T-cell (primary cell): ENCODE measurements at regions of chr1 and their contacts with region 1.

Region 1: DNA sequence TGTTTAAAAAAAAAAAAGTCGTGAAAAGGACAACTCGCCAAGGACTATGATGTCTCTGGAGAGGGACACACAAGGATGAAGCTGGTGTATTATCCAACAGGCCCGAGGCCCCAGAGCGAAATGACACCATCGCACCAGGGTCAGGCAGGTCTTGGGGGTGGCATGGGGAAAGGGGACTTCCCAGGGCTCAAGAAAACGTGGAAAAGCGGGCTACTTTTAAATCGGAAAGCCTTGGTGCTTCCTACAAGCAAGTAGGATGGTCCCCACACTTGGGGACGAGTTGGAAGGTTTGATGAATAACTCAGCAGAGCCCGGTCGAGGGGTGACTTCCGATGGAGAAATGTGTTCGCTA is 505 bp upstream of the GNPAT start:
- DNase-seq: peak in 1 of 35 experiments; percentile 4
- ATAC-seq: peak in 2 of 4 experiments; percentile 3 to 11
- H3K4me3 ChIP-seq: peak overlapping the region; percentile 68 to 96
- H3K4me3 Mint-ChIP-seq: peak overlapping the region; percentile 91 to 97 (median 94)
- H3K27ac ChIP-seq: peak overlapping the region; percentile 67
- H3K27ac Mint-ChIP-seq: peak overlapping the region; percentile 95 to 98
- H3K4me1 ChIP-seq: peaks cover 21 to 22% of the 10 kb centered on the region in 2 experiments
- H3K4me1 Mint-ChIP-seq: peaks cover 75 to 85% (median 80%) of the 10 kb centered on the region in 3 donors
- H3K27me3 ChIP-seq: no peaks in the 10 kb centered on the region
- H3K27me3 Mint-ChIP-seq: no peaks in the 10 kb centered on the region

Region 2: DNA sequence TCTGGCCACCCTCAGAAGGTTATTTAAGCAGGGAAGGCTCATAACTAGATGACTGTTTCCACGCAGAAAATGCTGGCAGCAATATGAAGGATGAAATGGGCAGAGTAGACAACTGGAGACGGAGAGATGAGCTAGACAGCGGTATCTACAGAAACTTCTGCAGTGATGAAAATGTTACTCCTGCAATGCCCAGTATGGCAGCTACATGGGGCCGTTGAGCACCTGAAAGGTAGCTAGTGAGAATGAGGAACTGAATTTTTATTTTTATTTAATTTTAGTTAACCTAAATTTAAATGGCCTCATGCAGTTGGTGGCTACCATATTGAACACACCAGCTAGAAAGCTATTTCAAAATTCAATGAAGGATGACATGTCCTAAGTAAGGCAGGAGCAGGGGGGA is 1362.1 kb after region 1 on chr1:
- CTCF ChIA-PET with region 1: interaction called in 1 of 2 experiments, 12 read pairs
- POLR2A ChIA-PET with region 1: no interaction called
- DNase-seq: no peak
- ATAC-seq: no peak
- H3K4me3 ChIP-seq: no peak overlapping the region
- H3K4me3 Mint-ChIP-seq: no peak overlapping the region
- H3K27ac ChIP-seq: no peak overlapping the region
- H3K27ac Mint-ChIP-seq: no peak overlapping the region
- H3K4me1 ChIP-seq: peaks cover 3 to 14% of the 10 kb centered on the region in 2 experiments
- H3K4me1 Mint-ChIP-seq: peaks cover 0 to 29% (median 15%) of the 10 kb centered on the region in 3 donors
- H3K27me3 ChIP-seq: no peaks in the 10 kb centered on the region
- H3K27me3 Mint-ChIP-seq: no peaks in the 10 kb centered on the region